ENCODE measurements at regions of chr2 and their contacts with region 1.

Region 1: DNA sequence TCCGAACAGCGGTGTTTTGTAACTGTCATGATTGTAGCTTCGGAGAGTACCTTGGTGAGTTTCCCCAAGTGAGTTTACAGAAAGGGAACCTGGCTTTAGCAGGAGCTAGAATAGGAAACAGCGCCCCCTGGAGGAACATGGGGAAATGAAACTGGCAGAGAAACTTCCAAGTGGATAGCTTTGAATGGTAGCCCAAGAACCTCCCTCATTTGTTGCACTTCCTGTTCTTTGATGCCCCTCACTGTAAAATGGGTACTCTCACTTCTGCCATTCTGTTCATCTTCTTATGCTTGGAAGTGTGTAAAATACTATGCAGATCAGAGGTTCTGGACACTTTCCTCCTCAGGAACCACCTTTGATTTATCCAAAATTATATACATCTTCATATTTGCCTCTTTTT is 36.2 kb downstream of the CHST10 start:
- DNase-seq: peak; percentile 69
- H3K4me3 ChIP-seq: no peak overlapping the region; a peak in 1 of 4 replicates
- H3K27ac ChIP-seq: no peak overlapping the region
- H3K4me1 ChIP-seq: no peaks in the 10 kb centered on the region
- H3K27me3 ChIP-seq: no peaks in the 10 kb centered on the region
- CTCF ChIP-seq: peak; percentile 90
- EP300 ChIP-seq: no peak
- RAD21 ChIP-seq: peak; percentile 88

Region 2: GRCh38 chr2:100272841-100273329 is 108.4 kb before region 1 on chr2:
- CTCF ChIA-PET with region 1: interaction called, 29 read pairs
- POLR2A ChIA-PET with region 1: no interaction called
- DNase-seq: peak; percentile 32
- H3K4me3 ChIP-seq: no peak overlapping the region
- H3K27ac ChIP-seq: no peak overlapping the region; a peak in 2 of 4 replicates
- H3K4me1 ChIP-seq: peaks cover 0 to 7% of the 10 kb centered on the region in 2 experiments; a peak in 2 of 4 replicates
- H3K27me3 ChIP-seq: no peaks in the 10 kb centered on the region
- CTCF ChIP-seq: no peak
- EP300 ChIP-seq: no peak
- RAD21 ChIP-seq: no peak

Region 3: GRCh38 chr2:100291120-100291970 is 89.9 kb before region 1 on chr2:
- CTCF ChIA-PET with region 1: interaction called, 10 read pairs
- POLR2A ChIA-PET with region 1: no interaction called
- DNase-seq: peak; percentile 67
- H3K4me3 ChIP-seq: no peak overlapping the region
- H3K27ac ChIP-seq: peak overlapping the region; percentile 86 to 97
- H3K4me1 ChIP-seq: peaks cover 26 to 39% of the 10 kb centered on the region in 2 experiments
- H3K27me3 ChIP-seq: no peaks in the 10 kb centered on the region
- CTCF ChIP-seq: no peak
- EP300 ChIP-seq: peak; percentile 70 to 86; a peak in 3 of 4 replicates
- RAD21 ChIP-seq: no peak

Region 4: GRCh38 chr2:100365434-100365833 is 15.8 kb before region 1 on chr2:
- CTCF ChIA-PET with region 1: interaction called, 25 read pairs
- POLR2A ChIA-PET with region 1: no interaction called
- DNase-seq: no peak
- H3K4me3 ChIP-seq: no peak overlapping the region
- H3K27ac ChIP-seq: no peak overlapping the region
- H3K4me1 ChIP-seq: no peaks in the 10 kb centered on the region; a peak in 1 of 4 replicates
- H3K27me3 ChIP-seq: no peaks in the 10 kb centered on the region
- CTCF ChIP-seq: no peak
- EP300 ChIP-seq: no peak
- RAD21 ChIP-seq: no peak

Region 5: GRCh38 chr2:100391735-100392515 is 10.7 kb after region 1 on chr2:
- CTCF ChIA-PET with region 1: interaction called, 15 read pairs
- POLR2A ChIA-PET with region 1: no interaction called
- DNase-seq: no peak
- H3K4me3 ChIP-seq: no peak overlapping the region
- H3K27ac ChIP-seq: no peak overlapping the region
- H3K4me1 ChIP-seq: no peaks in the 10 kb centered on the region
- H3K27me3 ChIP-seq: no peaks in the 10 kb centered on the region
- CTCF ChIP-seq: no peak
- EP300 ChIP-seq: no peak
- RAD21 ChIP-seq: no peak

Region 6: DNA sequence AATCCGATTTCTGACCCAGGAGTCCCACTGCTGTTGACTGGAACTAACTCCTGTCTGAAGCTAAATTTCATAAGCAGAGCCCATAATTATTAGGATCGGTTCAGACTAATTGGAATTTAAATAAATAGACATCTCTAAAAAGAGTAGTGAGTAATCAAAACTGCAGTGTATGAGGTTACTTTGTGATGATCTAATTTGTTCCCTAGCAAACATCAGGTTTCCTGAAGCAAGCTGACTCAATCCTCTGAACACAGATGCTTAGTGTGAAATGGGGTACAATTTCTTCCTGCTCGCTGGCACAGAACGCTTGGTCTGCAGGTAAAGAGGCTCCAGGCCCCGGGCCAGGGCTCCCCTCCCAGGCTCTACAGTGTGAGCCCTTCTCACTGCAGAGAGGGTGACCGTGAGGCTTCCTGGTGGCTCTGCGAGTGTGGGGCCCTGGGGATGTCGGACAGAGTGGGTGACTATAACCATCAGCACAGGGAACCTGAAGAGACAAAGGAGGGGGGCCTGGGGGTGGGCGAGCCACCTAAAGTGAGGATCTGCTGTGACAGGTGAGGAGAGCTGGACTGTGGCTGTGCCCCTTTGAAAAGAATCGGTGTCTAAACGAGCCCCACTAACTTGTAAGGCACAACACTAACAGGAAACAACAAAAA is 16.0 kb after region 1 on chr2:
- CTCF ChIA-PET with region 1: interaction called, 16 read pairs
- POLR2A ChIA-PET with region 1: no interaction called
- DNase-seq: peak; percentile 4
- H3K4me3 ChIP-seq: no peak overlapping the region
- H3K27ac ChIP-seq: no peak overlapping the region
- H3K4me1 ChIP-seq: no peaks in the 10 kb centered on the region
- H3K27me3 ChIP-seq: no peaks in the 10 kb centered on the region
- CTCF ChIP-seq: no peak
- EP300 ChIP-seq: no peak
- RAD21 ChIP-seq: no peak

Region 7: GRCh38 chr2:100992262-100992661 is 611.0 kb after region 1 on chr2:
- CTCF ChIA-PET with region 1: no interaction called
- POLR2A ChIA-PET with region 1: no interaction called
- DNase-seq: no peak
- H3K4me3 ChIP-seq: no peak overlapping the region
- H3K27ac ChIP-seq: no peak overlapping the region
- H3K4me1 ChIP-seq: no peaks in the 10 kb centered on the region; a peak in 1 of 4 replicates
- H3K27me3 ChIP-seq: no peaks in the 10 kb centered on the region
- CTCF ChIP-seq: no peak
- EP300 ChIP-seq: no peak
- RAD21 ChIP-seq: no peak

Region 8: GRCh38 chr2:101371636-101372035 is 990.4 kb after region 1 on chr2:
- CTCF ChIA-PET with region 1: no interaction called
- POLR2A ChIA-PET with region 1: no interaction called
- DNase-seq: no peak
- H3K4me3 ChIP-seq: no peak overlapping the region
- H3K27ac ChIP-seq: no peak overlapping the region
- H3K4me1 ChIP-seq: no peaks in the 10 kb centered on the region
- H3K27me3 ChIP-seq: no peaks in the 10 kb centered on the region
- CTCF ChIP-seq: no peak
- EP300 ChIP-seq: no peak
- RAD21 ChIP-seq: no peak

Measured in SK-N-SH (cell line).